Right ventricle myocardium inferior (tissue), 1 donor: ENCODE measurements at regions of chr5 and their contacts with region 1.

Region 1: GRCh38 chr5:11609570-11610322 is 294.5 kb downstream of the CTNND2 start:
- DNase-seq: peak; percentile 53
- ATAC-seq: peak; percentile 90

Region 2: GRCh38 chr5:10975945-10976344 is 633.8 kb before region 1 on chr5:
- intact Hi-C with region 1: no loop called
- DNase-seq: no peak
- ATAC-seq: no peak

Region 3: DNA sequence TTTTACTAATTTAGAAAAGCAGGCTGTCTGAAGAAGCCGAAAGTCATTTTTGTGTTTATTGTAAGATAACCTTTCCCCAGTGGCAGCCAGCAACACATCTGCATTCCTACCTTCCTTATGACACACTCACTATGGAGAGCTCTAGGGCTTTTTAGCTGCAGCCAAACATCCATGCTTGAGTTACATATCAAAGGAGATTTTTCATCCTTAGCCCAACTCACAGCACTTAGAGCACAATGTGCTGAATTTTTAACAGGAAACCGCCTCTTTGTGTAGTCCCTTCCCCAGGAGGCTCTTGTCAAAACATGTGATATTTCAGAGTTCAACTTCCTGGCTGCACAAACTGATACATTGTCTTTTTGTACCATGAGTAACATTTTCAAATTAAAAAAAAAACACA is 84.7 kb before region 1 on chr5:
- intact Hi-C with region 1: loop called (anchors 5 kb)
- DNase-seq: no peak
- ATAC-seq: no peak